Activated CD8-positive, alpha-beta T cell treated with anti-CD3 and anti-CD28 coated beads for 36 hours (primary cell): ENCODE measurements at regions of chr7 and their contacts with region 1.

Region 1: DNA sequence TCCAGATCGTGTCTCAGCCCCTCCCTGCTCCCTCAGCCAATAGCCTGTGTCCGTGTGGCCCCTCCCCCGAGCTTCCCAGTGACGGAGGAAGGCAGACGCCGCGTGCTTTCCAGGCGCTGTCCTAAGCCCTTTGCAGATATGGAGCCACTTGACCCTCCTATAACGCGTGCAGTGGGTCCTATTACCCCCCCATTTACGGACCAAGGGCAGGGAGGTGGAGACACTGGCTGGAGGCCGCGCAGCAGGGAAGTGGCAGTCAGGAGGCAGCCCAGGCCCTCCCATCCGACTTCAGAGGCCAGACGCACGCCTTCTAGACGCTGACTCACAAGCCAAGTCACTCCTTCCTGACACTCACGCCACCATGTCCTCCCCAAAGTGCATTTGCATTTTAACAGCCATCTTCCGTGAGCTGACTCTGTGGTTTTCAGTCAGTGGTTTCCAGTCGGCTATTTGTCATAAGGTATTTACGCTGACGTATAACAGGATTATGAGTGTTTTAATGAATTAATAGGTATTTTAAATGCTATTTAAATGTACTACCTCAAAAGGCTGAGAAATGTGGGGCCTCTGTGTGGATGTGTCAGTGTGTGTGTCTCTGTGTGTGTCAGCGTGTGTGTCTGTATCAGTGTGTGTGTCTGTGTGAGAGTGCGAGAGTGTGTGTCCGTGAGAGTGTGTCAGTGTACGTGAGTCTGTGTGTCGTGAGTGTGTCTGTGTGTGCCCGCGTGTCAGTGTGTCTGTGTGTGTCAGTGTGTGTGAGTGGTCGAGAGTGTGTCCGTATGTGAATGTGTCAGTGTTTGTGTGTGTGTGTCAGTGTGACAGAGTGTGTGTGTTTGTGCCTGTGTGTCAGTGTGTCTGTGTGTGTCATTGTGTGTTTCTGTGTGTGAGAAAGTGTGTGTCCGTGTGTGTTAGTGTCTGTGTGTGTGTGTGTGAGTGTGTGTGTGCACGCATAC is 92.0 kb upstream of the INSIG1 start:
- DNase-seq: peak; percentile 96
- ATAC-seq: peak; percentile 89
- H3K4me3 Mint-ChIP-seq: peak overlapping the region; percentile 82
- H3K27ac Mint-ChIP-seq: peak overlapping the region; percentile 100
- H3K4me1 Mint-ChIP-seq: peaks cover 37% of the 10 kb centered on the region
- H3K27me3 Mint-ChIP-seq: no peaks in the 10 kb centered on the region
- CTCF ChIP-seq: no peak

Region 2: DNA sequence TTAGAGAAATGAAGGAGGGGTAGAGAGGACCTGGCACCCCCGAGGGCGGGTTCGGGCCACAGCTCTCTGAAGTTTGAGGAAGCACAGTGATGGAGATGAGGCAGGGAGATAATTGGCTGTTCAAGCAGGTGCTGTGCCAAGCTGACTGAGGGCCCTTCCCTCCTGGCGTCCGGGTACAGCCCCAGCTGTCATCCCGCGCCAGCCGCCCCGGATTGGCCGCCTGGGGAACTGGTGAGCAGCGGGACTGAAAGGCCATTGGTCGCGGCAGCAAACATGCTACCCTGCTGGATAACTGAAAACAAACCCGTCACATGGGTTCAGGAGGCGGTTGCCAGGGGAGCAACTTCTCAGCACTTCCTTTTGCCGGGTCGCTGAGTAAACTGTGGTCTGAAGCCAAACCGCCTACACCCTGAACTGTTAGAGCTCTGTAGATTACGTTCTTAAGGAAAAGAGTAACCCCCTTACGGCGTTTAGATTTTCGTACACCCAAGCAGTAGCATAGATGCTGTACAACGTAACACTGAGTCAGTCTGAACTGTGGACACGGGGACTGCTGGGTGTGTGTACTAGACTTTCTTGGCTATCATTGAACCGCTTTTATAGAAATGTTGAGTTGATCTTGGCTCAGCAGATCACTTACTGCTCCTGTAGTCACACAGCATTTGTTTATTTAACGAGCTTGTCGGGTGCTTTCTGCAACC is 93.3 kb after region 1 on chr7:
- CTCF ChIA-PET with region 1: interaction called, 10 read pairs
- POLR2A ChIA-PET with region 1: interaction called, 48 read pairs
- intact Hi-C with region 1: loop called (anchors 1 kb)
- DNase-seq: peak; percentile 98
- ATAC-seq: peak; percentile 80
- H3K4me3 Mint-ChIP-seq: peak overlapping the region; percentile 96
- H3K27ac Mint-ChIP-seq: peak overlapping the region; percentile 93
- H3K4me1 Mint-ChIP-seq: peaks cover 43% of the 10 kb centered on the region
- H3K27me3 Mint-ChIP-seq: no peaks in the 10 kb centered on the region
- CTCF ChIP-seq: no peak

Region 3: DNA sequence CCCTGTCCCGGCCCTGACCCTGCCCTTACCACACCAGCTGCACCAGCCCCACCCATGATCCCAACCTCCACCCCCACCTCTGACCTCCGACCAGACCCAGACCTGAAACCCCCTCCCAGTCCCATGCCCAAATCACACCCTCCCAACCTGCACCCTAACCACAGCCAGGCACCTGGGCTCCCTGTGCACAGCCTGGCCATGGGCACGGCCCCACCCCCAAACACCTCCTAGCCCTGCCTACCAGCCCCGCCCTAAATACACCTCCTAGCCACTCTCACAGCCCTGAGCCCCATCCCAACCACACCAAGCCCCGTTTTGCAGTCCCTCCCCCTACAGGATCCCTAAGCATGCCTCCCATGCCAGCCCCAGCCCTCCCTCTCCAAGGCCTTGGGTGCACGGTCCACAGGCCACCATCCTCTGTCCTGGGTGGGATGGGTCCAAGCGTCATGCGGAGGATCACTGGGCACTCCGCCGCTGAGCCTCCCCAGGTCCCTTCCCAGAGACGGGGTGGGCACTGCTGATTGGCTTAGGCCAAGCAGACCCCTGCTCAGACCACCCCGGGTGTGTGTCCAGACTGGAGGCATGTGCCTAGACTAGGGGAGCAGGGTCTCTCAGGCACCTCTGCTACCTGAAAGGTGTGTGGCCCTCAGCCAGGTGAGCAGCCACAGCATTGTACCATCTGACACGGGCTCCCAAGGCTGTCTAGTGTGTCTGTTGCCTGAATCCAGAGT is 122.1 kb after region 1 on chr7:
- CTCF ChIA-PET with region 1: no interaction called
- POLR2A ChIA-PET with region 1: no interaction called
- intact Hi-C with region 1: no loop called
- DNase-seq: no peak
- ATAC-seq: no peak
- H3K4me3 Mint-ChIP-seq: no peak overlapping the region
- H3K27ac Mint-ChIP-seq: no peak overlapping the region
- H3K4me1 Mint-ChIP-seq: no peaks in the 10 kb centered on the region
- H3K27me3 Mint-ChIP-seq: peaks cover 8% of the 10 kb centered on the region
- CTCF ChIP-seq: no peak

Region 4: GRCh38 chr7:155338632-155339320 is 133.1 kb after region 1 on chr7:
- CTCF ChIA-PET with region 1: no interaction called
- POLR2A ChIA-PET with region 1: interaction called, 4 read pairs
- intact Hi-C with region 1: loop called (anchors 5 kb)
- DNase-seq: peak; percentile 79
- ATAC-seq: peak; percentile 86
- H3K4me3 Mint-ChIP-seq: peak overlapping the region; percentile 35
- H3K27ac Mint-ChIP-seq: peak overlapping the region; percentile 18
- H3K4me1 Mint-ChIP-seq: peaks cover 12% of the 10 kb centered on the region
- H3K27me3 Mint-ChIP-seq: peaks cover 23% of the 10 kb centered on the region
- CTCF ChIP-seq: no peak